AG04449 (cell line): ENCODE measurements at regions of chr10 and their contacts with region 1.

Region 1: DNA sequence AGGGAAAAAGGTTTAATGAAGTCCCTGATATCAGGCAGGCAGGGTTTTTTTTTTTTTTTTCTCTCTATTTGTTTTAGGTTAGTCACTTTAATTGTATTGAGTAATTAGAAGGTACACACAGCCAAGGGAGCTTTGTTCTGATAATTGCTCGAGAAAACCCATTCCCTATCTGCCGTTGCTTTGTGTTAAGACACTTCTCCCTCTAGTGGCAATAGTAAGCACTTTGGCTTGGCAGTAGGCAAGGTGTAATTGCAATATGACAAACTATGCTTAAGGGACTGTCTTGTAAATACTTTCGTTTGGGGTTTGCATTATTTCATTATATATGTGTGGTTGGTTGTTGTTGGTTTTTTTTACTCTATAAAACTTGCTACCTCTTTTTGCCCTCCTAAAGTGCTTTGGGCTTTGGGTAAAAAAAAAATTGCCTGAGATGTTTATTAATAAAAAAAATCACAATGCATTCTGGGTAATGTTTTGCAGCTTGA is 113.4 kb downstream of the BTRC start:
- DNase-seq: peak; percentile 33
- H3K4me3 ChIP-seq: no peak overlapping the region
- CTCF ChIP-seq: peak; percentile 85

Region 2: GRCh38 chr10:101272229-101272868 is 195.0 kb before region 1 on chr10:
- CTCF ChIA-PET with region 1: interaction called, 16 read pairs
- POLR2A ChIA-PET with region 1: no interaction called
- DNase-seq: no peak
- H3K4me3 ChIP-seq: no peak overlapping the region
- CTCF ChIP-seq: peak; percentile 82

Region 3: GRCh38 chr10:101441541-101442455 is 25.5 kb before region 1 on chr10:
- CTCF ChIA-PET with region 1: interaction called, 34 read pairs
- POLR2A ChIA-PET with region 1: interaction called, 3 read pairs
- DNase-seq: peak; percentile 19
- H3K4me3 ChIP-seq: no peak overlapping the region
- CTCF ChIP-seq: peak; percentile 64

Region 4: GRCh38 chr10:101453791-101454718 is 13.3 kb before region 1 on chr10:
- CTCF ChIA-PET with region 1: interaction called, 94 read pairs
- POLR2A ChIA-PET with region 1: no interaction called
- DNase-seq: no peak
- H3K4me3 ChIP-seq: no peak overlapping the region
- CTCF ChIP-seq: no peak

Region 5: GRCh38 chr10:101485681-101486554 is 18.6 kb after region 1 on chr10:
- CTCF ChIA-PET with region 1: interaction called, 109 read pairs
- POLR2A ChIA-PET with region 1: no interaction called
- DNase-seq: no peak
- H3K4me3 ChIP-seq: no peak overlapping the region
- CTCF ChIP-seq: no peak

Region 6: DNA sequence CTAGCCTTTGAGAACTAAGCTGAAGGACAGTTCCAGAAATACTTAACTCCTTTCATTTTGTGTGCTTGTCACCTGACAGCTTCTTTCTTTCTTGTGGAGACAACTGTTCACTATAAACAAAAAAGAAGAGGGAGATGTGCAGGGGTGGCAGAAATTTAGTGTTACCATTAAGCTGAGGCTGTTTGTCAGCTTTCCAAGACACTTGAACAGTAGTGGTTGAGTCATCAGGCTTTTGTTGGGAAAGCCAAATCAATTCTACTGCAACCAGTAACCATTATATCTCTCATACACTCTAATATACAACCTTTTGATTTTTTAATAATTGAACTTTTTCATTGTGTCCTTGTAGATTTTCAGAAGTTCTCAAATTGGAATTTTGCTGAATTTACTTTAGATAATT is 45.4 kb after region 1 on chr10:
- CTCF ChIA-PET with region 1: interaction called, 11 read pairs
- POLR2A ChIA-PET with region 1: no interaction called
- DNase-seq: no peak
- H3K4me3 ChIP-seq: no peak overlapping the region
- CTCF ChIP-seq: no peak